Right cardiac atrium (tissue), 5 donors: ENCODE measurements at regions of chr9 and their contacts with region 1.

Region 1: GRCh38 chr9:16213781-16214515 is 656.5 kb downstream of the BNC2 start:
- DNase-seq: peak; percentile 71 to 82 (median 72)
- ATAC-seq: peak; percentile 97 to 99
- H3K4me3 ChIP-seq: no peak overlapping the region
- H3K27ac ChIP-seq: no peak overlapping the region
- H3K4me1 ChIP-seq: peaks cover 3% of the 10 kb centered on the region
- H3K27me3 ChIP-seq: no peaks in the 10 kb centered on the region

Region 2: DNA sequence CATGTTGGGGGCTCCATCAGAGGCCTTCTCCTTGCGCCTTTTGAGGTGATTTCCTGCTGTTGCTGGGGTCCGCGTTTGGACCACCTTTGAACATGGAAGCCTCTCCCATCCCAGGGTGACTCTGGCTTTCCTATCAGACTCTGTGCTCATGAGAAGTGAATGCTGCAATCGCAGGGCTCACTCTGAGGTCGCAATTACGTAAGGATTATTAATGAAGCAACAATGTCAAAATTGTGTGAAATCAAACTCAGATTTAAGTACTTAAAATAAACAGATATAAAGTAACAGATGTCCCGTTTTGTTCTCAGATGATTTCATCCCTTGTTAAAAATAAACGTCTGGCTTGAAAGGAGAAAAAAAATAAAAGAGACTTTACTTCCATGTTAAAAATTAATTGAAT is 22.4 kb after region 1 on chr9:
- intact Hi-C with region 1: loop called in 1 of 4 experiments (anchors 2 kb)
- DNase-seq: peak in 2 of 3 donors; percentile 30 to 44
- ATAC-seq: peak; percentile 74
- H3K4me3 ChIP-seq: no peak overlapping the region
- H3K27ac ChIP-seq: no peak overlapping the region
- H3K4me1 ChIP-seq: no peaks in the 10 kb centered on the region
- H3K27me3 ChIP-seq: no peaks in the 10 kb centered on the region

Region 3: DNA sequence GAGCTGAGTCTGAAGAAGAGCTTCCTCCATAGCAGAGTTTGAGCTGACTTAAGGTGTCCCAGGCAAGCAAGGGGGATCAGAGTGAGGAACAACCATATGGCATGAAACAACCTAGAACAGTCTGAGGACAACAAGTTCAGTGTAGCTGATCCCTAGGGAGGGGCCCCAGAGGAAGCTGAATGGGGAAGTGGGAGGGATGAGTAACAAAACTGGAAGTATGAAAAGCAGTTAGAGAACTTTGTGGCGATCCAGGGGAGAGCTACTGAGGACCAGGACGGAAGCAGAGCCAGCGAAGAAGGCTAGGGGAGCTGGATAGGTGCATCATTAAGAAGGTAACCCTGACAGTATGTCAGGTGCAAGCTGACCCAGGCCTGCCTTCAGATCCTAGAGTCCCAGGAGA is 75.7 kb after region 1 on chr9:
- intact Hi-C with region 1: no loop called
- DNase-seq: no peak
- ATAC-seq: peak; percentile 66 to 69
- H3K4me3 ChIP-seq: no peak overlapping the region
- H3K27ac ChIP-seq: no peak overlapping the region
- H3K4me1 ChIP-seq: no peaks in the 10 kb centered on the region
- H3K27me3 ChIP-seq: no peaks in the 10 kb centered on the region